ENCODE measurements at regions of chr9 and their contacts with region 1.

Region 1: GRCh38 chr9:106862825-106863720 is at the start of gene ZNF462:
- DNase-seq: peak; percentile 73
- H3K4me3 Mint-ChIP-seq: peak within 1 kb of the TSS; percentile 84
- H3K27ac Mint-ChIP-seq: peak within 1 kb of the TSS; percentile 53
- H3K4me1 Mint-ChIP-seq: peaks cover 23% of the 10 kb centered on the region
- H3K27me3 Mint-ChIP-seq: no peaks in the 10 kb centered on the region
- CTCF ChIP-seq: peak; percentile 24
- total RNA-seq, gene ZNF462: 45.7 and 47.2 TPM in 2 replicates

Region 2: GRCh38 chr9:105901514-105902109 is 961.5 kb before region 1 on chr9:
- CTCF ChIA-PET with region 1: interaction called, 3 read pairs
- POLR2A ChIA-PET with region 1: no interaction called
- intact Hi-C with region 1: loop called (anchors 2 kb)
- DNase-seq: peak; percentile 68
- H3K4me3 Mint-ChIP-seq: no peak overlapping the region
- H3K27ac Mint-ChIP-seq: no peak overlapping the region
- H3K4me1 Mint-ChIP-seq: no peaks in the 10 kb centered on the region
- H3K27me3 Mint-ChIP-seq: no peaks in the 10 kb centered on the region
- CTCF ChIP-seq: peak; percentile 63

Region 3: GRCh38 chr9:106697750-106698502 is 165.1 kb before region 1 on chr9:
- CTCF ChIA-PET with region 1: interaction called, 3 read pairs
- POLR2A ChIA-PET with region 1: interaction called, 7 read pairs
- intact Hi-C with region 1: loop called (anchors 2 kb)
- DNase-seq: peak; percentile 74
- H3K4me3 Mint-ChIP-seq: peak overlapping the region; percentile 56
- H3K27ac Mint-ChIP-seq: peak overlapping the region; percentile 55
- H3K4me1 Mint-ChIP-seq: peaks cover 9% of the 10 kb centered on the region
- H3K27me3 Mint-ChIP-seq: no peaks in the 10 kb centered on the region
- CTCF ChIP-seq: no peak

Region 4: GRCh38 chr9:106878924-106879323 is 15.9 kb after region 1 on chr9:
- CTCF ChIA-PET with region 1: interaction called, 121 read pairs
- POLR2A ChIA-PET with region 1: interaction called, 710 read pairs
- intact Hi-C with region 1: no loop called
- DNase-seq: peak; percentile 92
- H3K4me3 Mint-ChIP-seq: no peak overlapping the region
- H3K27ac Mint-ChIP-seq: peak overlapping the region; percentile 76
- H3K4me1 Mint-ChIP-seq: peaks cover 57% of the 10 kb centered on the region
- H3K27me3 Mint-ChIP-seq: no peaks in the 10 kb centered on the region
- CTCF ChIP-seq: no peak

Region 5: DNA sequence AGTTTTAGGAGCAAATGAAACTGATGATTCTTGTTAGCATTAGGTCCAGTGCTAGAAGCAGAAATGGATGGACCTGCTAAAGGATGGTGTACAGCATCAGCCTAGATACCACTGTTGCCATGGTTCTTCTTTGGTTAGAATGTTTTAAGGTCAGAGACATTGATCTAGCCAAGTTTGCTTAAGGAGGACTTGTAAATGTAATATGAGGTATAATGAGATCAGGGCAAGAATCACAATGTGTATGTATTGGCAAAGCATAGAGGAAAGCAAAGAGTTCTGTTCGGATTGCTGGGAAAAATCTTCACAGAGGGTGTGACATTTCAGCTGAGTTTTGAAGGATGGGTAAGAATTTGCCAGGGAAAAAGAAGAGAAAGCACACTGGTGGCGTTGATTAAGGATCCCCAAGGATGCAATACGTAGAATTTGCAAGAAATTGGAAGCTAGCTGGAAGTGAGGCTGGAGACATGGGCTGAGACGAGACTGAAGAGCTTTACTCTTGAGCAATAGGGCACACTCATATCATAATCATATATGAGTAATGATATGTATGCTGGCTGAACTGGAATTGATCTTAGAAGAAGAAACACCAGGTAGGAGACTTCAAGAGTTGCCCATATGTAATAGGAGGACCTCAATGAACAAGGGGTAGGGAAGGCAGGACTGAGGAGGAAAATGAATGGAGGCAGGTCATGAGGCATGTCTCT is 101.9 kb after region 1 on chr9:
- CTCF ChIA-PET with region 1: interaction called, 3 read pairs
- POLR2A ChIA-PET with region 1: interaction called, 3 read pairs
- intact Hi-C with region 1: loop called (anchors 5 kb)
- DNase-seq: peak; percentile 62
- H3K4me3 Mint-ChIP-seq: peak overlapping the region; percentile 4
- H3K27ac Mint-ChIP-seq: peak overlapping the region; percentile 25
- H3K4me1 Mint-ChIP-seq: peaks cover 26% of the 10 kb centered on the region
- H3K27me3 Mint-ChIP-seq: no peaks in the 10 kb centered on the region
- CTCF ChIP-seq: no peak

Region 6: GRCh38 chr9:107172160-107172978 is 309.3 kb after region 1 on chr9:
- CTCF ChIA-PET with region 1: interaction called, 5 read pairs
- POLR2A ChIA-PET with region 1: interaction called, 3 read pairs
- intact Hi-C with region 1: loop called (anchors 1 kb)
- DNase-seq: peak; percentile 84
- H3K4me3 Mint-ChIP-seq: no peak overlapping the region
- H3K27ac Mint-ChIP-seq: no peak overlapping the region
- H3K4me1 Mint-ChIP-seq: peaks cover 8% of the 10 kb centered on the region
- H3K27me3 Mint-ChIP-seq: no peaks in the 10 kb centered on the region
- CTCF ChIP-seq: peak; percentile 87

Measured in MCF 10A (cell line).